ENCODE measurements at regions of chr2 and their contacts with region 1.

Region 1: DNA sequence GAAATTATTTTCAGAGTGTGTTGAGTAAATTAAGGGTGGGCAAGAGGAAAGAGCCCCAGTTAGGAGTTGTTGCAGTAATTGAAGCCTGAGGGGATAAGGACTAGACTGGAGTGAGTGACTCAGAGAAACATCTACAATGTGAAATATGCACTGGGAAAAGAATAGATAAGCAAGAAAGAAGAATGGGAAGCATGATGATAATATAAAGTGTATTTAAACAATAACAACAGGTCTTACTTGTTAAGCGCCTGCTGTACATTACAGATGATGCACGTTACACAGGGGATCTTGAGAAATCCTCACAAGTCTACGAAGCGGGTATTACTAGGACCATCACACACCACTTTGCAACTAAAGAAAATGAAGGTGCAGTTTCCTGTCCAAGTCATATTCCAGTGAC is 73.6 kb upstream of the STK17B start:
- DNase-seq: no peak
- H3K4me3 ChIP-seq: no peak overlapping the region
- H3K27ac ChIP-seq: peak overlapping the region in 1 of 8 donors; percentile 34
- H3K4me1 ChIP-seq: peaks cover 27 to 99% (median 61%) of the 10 kb centered on the region in 6 donors
- H3K27me3 ChIP-seq: no peaks in the 10 kb centered on the region
- CTCF ChIP-seq: no peak
- POLR2A ChIP-seq: no peak

Region 2: GRCh38 chr2:195594248-195594647 is 650.7 kb before region 1 on chr2:
- intact Hi-C with region 1: no loop called
- DNase-seq: no peak
- H3K4me3 ChIP-seq: peak overlapping the region in 1 of 8 donors; percentile 3
- H3K27ac ChIP-seq: peak overlapping the region in 7 of 8 donors; percentile 22 to 75 (median 53)
- H3K4me1 ChIP-seq: peaks cover 5 to 38% (median 12%) of the 10 kb centered on the region in 6 donors
- H3K27me3 ChIP-seq: no peaks in the 10 kb centered on the region
- CTCF ChIP-seq: no peak
- POLR2A ChIP-seq: no peak

Region 3: GRCh38 chr2:195995499-195995898 is 249.5 kb before region 1 on chr2:
- intact Hi-C with region 1: no loop called
- DNase-seq: no peak
- H3K4me3 ChIP-seq: no peak overlapping the region
- H3K27ac ChIP-seq: no peak overlapping the region
- H3K4me1 ChIP-seq: no peaks in the 10 kb centered on the region
- H3K27me3 ChIP-seq: no peaks in the 10 kb centered on the region
- CTCF ChIP-seq: no peak
- POLR2A ChIP-seq: no peak

Region 4: DNA sequence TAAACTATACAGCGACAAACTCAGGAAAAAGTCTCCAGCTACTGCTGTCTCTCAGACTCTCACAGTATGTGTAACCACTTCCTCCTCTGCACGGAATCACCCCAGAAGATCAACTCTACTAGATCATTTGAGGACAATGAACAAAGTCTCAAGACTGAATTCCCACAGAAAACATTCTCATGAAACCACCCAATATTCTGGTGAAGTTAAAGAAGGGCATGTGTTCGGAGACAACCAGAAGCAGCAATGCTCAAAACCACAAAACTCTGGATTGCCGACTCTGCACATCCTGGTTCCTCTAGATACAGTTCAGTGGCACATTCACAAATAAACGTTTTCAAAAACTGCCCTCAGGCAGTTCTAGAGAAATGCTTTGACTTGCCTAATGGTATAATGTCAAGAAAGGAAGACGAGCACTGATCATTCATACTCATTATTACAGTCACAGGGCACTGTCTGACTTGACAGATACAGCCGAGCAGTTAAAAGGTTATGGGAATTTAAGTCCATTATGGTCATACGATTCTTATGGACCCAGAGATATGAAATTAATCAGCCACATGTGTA is 18.3 kb after region 1 on chr2:
- intact Hi-C with region 1: loop called (anchors 2 kb)
- DNase-seq: no peak
- H3K4me3 ChIP-seq: peak overlapping the region in 2 of 8 donors; percentile 6 to 33
- H3K27ac ChIP-seq: peak overlapping the region; percentile 51 to 90 (median 76)
- H3K4me1 ChIP-seq: peaks cover 25 to 93% (median 57%) of the 10 kb centered on the region in 6 donors
- H3K27me3 ChIP-seq: no peaks in the 10 kb centered on the region
- CTCF ChIP-seq: no peak
- POLR2A ChIP-seq: no peak

Measured in spleen (tissue), 13 donors.